Activated CD4-positive, alpha-beta memory T cell treated with anti-CD3 and anti-CD28 coated beads for 36 hours (primary cell): ENCODE measurements at regions of chr20 and their contacts with region 1.

Region 1: GRCh38 chr20:53660078-53660909 is 66.7 kb upstream of the ZNF217 start:
- DNase-seq: peak; percentile 58
- H3K4me3 Mint-ChIP-seq: peak overlapping the region; percentile 78
- H3K27ac Mint-ChIP-seq: peak overlapping the region; percentile 83
- H3K4me1 Mint-ChIP-seq: peaks cover 55% of the 10 kb centered on the region
- H3K27me3 Mint-ChIP-seq: no peaks in the 10 kb centered on the region

Region 2: DNA sequence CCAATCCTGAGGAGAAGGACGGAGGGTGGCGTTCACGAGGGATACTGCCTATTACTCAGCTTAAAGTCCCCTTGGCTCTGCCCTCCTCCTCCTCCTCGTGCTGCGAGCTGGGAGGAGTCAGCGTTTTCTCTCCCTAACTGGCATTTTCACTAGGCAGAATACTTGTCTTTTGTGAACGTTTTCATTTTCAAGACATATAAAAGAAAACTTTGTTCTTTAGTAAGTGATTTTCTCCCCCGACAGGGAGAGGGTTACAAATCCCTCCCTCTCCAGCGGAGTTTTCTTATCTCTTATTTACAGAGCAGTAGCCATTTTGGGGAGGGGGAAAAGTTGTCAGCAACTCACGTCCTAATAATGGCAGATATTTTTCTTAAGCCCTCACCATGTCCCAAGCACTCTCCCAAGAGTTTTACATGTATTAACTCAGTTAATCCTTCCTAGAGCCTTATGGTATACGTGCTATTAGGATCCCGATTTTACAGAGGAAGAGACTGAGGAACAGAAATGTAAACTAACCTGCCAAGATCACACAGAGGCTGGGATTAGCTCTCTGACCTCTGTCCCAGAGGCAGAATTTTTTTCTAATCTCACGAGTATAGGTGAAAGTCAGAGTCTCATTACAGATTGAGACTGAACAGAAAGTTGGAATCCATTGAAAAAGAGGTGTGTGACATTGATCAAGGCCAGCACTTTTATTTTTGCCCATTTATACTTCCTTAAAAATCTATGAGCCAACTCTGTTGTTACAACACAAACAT is 36.7 kb before region 1 on chr20:
- CTCF ChIA-PET with region 1: interaction called, 5 read pairs
- POLR2A ChIA-PET with region 1: interaction called, 4 read pairs
- intact Hi-C with region 1: loop called (anchors 2 kb)
- DNase-seq: peak; percentile 59
- H3K4me3 Mint-ChIP-seq: peak overlapping the region; percentile 73
- H3K27ac Mint-ChIP-seq: peak overlapping the region; percentile 88
- H3K4me1 Mint-ChIP-seq: peaks cover 35% of the 10 kb centered on the region
- H3K27me3 Mint-ChIP-seq: no peaks in the 10 kb centered on the region

Region 3: GRCh38 chr20:53643031-53643832 is 17.1 kb before region 1 on chr20:
- CTCF ChIA-PET with region 1: interaction called, 5 read pairs
- POLR2A ChIA-PET with region 1: interaction called, 4 read pairs
- intact Hi-C with region 1: loop called (anchors 1 kb)
- DNase-seq: peak; percentile 76
- H3K4me3 Mint-ChIP-seq: peak overlapping the region; percentile 68
- H3K27ac Mint-ChIP-seq: peak overlapping the region; percentile 88
- H3K4me1 Mint-ChIP-seq: peaks cover 28% of the 10 kb centered on the region
- H3K27me3 Mint-ChIP-seq: no peaks in the 10 kb centered on the region

Region 4: DNA sequence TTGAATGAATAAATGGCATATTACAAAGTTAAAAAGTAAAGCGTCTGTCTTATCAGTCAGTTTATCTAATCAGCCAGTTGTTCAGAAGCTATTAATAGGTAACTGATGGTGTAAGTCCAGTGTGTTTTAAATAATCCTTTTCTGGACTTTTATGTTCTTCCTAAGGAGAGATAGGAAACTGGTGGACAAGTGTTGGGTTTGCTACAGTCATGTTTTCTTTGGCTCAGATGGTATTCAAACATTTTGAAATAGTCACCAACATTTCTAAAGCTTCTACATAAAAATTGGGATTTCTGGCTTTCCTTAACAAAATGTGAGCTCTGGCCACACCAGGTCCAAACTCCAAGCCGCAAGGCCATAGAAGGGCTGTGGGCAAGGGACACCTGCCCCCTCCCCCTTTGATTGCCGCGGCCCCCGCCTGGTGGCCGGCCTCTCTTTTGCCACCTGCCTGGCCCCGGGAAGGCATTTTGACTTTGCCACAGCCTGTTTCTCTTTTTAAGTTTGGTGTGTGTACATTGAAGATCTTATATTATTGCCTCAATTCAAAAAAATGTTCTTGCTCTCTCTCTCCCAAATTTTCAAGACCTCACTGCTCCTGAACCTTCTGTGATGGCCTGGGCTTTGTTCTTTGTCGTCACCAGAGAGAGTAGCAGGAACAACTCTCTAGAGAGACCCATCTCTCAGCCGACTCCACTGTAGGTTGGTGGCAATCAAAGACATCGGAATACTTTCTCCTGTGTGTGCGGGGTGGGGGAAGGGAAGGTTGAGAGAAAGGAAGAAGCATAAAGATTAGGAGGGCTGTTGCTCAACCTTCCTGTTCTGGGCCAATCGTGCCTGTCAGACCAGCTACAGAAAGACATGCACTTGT is 17.4 kb after region 1 on chr20:
- CTCF ChIA-PET with region 1: no interaction called
- POLR2A ChIA-PET with region 1: no interaction called
- intact Hi-C with region 1: loop called (anchors 2 kb)
- DNase-seq: peak; percentile 21
- H3K4me3 Mint-ChIP-seq: peak overlapping the region; percentile 43
- H3K27ac Mint-ChIP-seq: peak overlapping the region; percentile 6
- H3K4me1 Mint-ChIP-seq: peaks cover 10% of the 10 kb centered on the region
- H3K27me3 Mint-ChIP-seq: no peaks in the 10 kb centered on the region

Region 5: GRCh38 chr20:53692413-53693067 is 32.2 kb after region 1 on chr20:
- CTCF ChIA-PET with region 1: interaction called, 4 read pairs
- POLR2A ChIA-PET with region 1: no interaction called
- intact Hi-C with region 1: loop called (anchors 2 kb)
- DNase-seq: peak; percentile 33
- H3K4me3 Mint-ChIP-seq: no peak overlapping the region
- H3K27ac Mint-ChIP-seq: peak overlapping the region; percentile 1
- H3K4me1 Mint-ChIP-seq: peaks cover 22% of the 10 kb centered on the region
- H3K27me3 Mint-ChIP-seq: no peaks in the 10 kb centered on the region

Region 6: DNA sequence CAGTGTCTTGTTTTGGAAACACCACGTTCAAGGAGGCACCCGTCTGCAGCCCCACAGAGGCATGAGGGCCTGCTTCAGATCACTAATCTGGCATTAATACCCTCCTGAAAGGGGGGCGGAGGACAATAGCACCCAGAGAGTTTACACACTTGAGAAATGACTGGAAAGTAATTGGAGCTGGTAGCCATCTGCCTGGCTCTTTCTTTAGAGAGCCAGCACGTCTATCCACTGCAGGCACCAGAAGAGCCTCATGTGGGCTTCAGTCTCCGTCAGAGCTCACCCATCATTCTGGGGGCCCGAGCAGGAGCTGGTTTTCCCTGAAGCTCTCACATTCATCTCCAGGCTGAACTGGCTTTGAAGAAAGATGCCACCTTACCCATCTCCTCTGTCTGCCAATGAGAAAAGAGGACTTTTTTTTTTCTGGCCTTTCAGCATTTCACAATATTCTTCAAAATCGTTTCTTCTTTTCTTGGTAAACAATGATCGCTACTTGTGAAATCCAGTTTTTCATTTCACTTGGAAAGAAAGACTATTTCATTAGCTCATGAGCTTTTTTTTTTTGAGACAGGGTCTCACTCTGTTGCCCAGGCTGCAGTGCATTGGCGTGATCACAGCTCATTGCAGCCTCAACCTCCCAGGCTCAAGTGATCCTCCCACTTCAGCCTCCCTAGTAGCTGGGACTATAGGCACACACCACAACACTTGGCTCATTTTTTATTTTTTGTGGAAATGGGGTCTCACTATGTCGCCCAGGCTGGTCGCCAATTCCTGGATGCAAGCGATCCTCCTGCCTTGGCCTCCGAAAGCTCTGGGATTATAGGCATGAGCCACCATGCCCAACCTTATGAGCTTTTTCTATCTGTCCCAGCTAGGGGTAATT is 58.1 kb after region 1 on chr20:
- CTCF ChIA-PET with region 1: no interaction called
- POLR2A ChIA-PET with region 1: no interaction called
- intact Hi-C with region 1: no loop called
- DNase-seq: no peak
- H3K4me3 Mint-ChIP-seq: no peak overlapping the region
- H3K27ac Mint-ChIP-seq: no peak overlapping the region
- H3K4me1 Mint-ChIP-seq: peaks cover 13% of the 10 kb centered on the region
- H3K27me3 Mint-ChIP-seq: no peaks in the 10 kb centered on the region

Region 7: GRCh38 chr20:53750827-53751619 is 90.7 kb after region 1 on chr20:
- CTCF ChIA-PET with region 1: no interaction called
- POLR2A ChIA-PET with region 1: no interaction called
- intact Hi-C with region 1: loop called (anchors 1 kb)
- DNase-seq: peak; percentile 53
- H3K4me3 Mint-ChIP-seq: peak overlapping the region; percentile 45
- H3K27ac Mint-ChIP-seq: peak overlapping the region; percentile 95
- H3K4me1 Mint-ChIP-seq: peaks cover 60% of the 10 kb centered on the region
- H3K27me3 Mint-ChIP-seq: no peaks in the 10 kb centered on the region

Region 8: GRCh38 chr20:53891306-53891944 is 231.1 kb after region 1 on chr20:
- CTCF ChIA-PET with region 1: no interaction called
- POLR2A ChIA-PET with region 1: interaction called, 3 read pairs
- intact Hi-C with region 1: loop called (anchors 2 kb)
- DNase-seq: no peak
- H3K4me3 Mint-ChIP-seq: no peak overlapping the region
- H3K27ac Mint-ChIP-seq: no peak overlapping the region
- H3K4me1 Mint-ChIP-seq: peaks cover 30% of the 10 kb centered on the region
- H3K27me3 Mint-ChIP-seq: no peaks in the 10 kb centered on the region